Activated naive CD4-positive, alpha-beta T cell treated with anti-CD3 and anti-CD28 coated beads for 36 hours (primary cell): ENCODE measurements at regions of chr2 and their contacts with region 1.

Region 1: GRCh38 chr2:49973917-49974368 is 819.6 kb upstream of the FSHR start:
- DNase-seq: peak; percentile 77
- H3K4me3 Mint-ChIP-seq: peak overlapping the region; percentile 82
- H3K27ac Mint-ChIP-seq: peak overlapping the region; percentile 61
- H3K4me1 Mint-ChIP-seq: peaks cover 2% of the 10 kb centered on the region
- H3K27me3 Mint-ChIP-seq: no peaks in the 10 kb centered on the region

Region 2: GRCh38 chr2:49940626-49941025 is 33.3 kb before region 1 on chr2:
- CTCF ChIA-PET with region 1: no interaction called
- intact Hi-C with region 1: loop called (anchors 2 kb)
- DNase-seq: no peak
- H3K4me3 Mint-ChIP-seq: peak overlapping the region; percentile 63
- H3K27ac Mint-ChIP-seq: no peak overlapping the region
- H3K4me1 Mint-ChIP-seq: peaks cover 23% of the 10 kb centered on the region
- H3K27me3 Mint-ChIP-seq: no peaks in the 10 kb centered on the region